Common myeloid progenitor, CD34-positive (primary cell): ENCODE measurements at regions of chr5 and their contacts with region 1.

Region 1: GRCh38 chr5:151051066-151051930 is 29.5 kb downstream of the TNIP1 start:
- DNase-seq: peak; percentile 84 to 91 (median 86)
- H3K4me3 ChIP-seq: no peak overlapping the region
- H3K27ac ChIP-seq: no peak overlapping the region
- H3K4me1 ChIP-seq: peaks cover 1 to 13% (median 9%) of the 10 kb centered on the region in 4 experiments
- H3K27me3 ChIP-seq: no peaks in the 10 kb centered on the region

Region 2: DNA sequence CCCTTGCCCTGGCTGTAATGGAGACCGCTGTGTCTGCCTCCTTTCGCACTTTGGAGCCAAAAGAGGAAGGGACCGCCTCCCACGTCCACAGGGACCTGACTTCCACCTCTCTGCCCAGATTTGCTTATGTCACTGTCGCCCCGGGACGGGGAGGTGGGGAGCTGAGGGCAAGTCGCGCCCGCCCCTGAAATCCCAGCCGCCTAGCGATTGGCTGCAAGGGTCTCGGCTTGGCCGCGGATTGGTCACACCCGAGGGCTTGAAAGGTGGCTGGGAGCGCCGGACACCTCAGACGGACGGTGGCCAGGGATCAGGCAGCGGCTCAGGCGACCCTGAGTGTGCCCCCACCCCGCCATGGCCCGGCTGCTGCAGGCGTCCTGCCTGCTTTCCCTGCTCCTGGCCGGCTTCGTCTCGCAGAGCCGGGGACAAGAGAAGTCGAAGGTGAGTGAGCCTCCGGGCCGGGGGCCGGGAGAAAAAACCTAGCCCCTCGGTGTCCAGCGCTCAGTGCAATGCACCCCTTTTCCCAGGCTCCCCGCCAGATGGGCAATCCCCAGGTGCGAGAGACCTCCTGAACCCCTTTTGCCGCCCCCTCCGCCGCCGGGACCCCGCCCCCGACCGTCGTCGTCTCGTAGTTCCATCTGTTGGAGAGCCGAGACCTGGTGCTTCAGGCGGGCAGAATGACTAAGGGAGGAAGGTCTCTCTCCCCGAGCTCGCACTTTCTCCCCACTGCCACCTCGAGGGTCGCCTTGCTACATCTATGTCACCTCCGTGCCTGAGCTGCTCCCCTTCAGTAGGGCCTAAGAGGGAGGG is 30.8 kb before region 1 on chr5 and contains the start of gene GPX3:
- CTCF ChIA-PET with region 1: interaction called, 10 read pairs
- POLR2A ChIA-PET with region 1: no interaction called
- DNase-seq: peak; percentile 72 to 87 (median 82)
- H3K4me3 ChIP-seq: peak within 1 kb of the TSS; percentile 30 to 78 (median 58)
- H3K27ac ChIP-seq: no peak within 1 kb of the TSS
- H3K4me1 ChIP-seq: peaks cover 0 to 20% (median 12%) of the 10 kb centered on the region in 4 experiments
- H3K27me3 ChIP-seq: peaks cover 0 to 2% (median 0%) of the 10 kb centered on the region in 5 experiments

Region 3: DNA sequence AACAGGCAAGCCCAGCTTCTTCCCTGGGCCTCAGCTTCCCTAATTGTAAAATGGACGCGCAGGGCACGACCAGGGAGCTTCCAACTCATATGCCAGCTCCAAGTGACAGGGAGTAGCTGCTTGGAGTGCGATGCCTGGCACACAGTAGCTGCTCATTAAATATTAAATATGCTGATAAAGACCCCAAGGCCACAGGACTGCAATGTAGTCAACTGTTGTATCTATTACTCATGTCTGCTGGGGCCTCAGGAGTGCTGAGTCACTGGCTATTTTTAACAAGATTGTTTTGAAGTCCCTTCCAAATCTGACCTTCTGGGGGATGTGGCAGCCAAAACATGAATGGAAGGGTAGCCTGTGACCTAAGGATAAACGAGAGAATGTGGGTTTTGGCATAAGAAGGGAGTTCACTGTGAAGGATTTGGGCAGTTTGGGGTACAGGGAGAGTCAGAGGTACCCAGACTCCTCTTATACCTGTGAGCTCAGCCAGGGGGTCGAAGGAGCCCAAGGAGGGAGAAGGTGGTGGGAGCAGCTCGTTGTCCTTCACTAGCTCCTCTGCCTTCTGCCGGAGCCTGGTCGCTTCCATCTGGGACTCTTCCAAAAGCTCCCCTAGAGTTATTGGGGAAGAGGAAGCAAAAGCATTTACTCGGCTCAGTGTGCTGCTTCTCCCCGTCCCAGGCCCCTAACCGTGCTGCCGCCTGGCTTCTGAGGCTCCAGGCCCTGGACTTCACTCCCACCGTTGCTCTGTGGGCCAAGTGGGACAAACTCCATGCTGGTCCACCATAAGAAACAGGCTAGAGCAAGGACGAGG is 12.0 kb after region 1 on chr5:
- CTCF ChIA-PET with region 1: interaction called, 75 read pairs
- POLR2A ChIA-PET with region 1: interaction called, 3 read pairs
- DNase-seq: peak in 2 of 3 donors; percentile 73 to 79
- H3K4me3 ChIP-seq: peak overlapping the region in 1 of 7 experiments; percentile 28
- H3K27ac ChIP-seq: peak overlapping the region in 1 of 2 experiments; percentile 71
- H3K4me1 ChIP-seq: peaks cover 7 to 67% (median 61%) of the 10 kb centered on the region in 4 experiments
- H3K27me3 ChIP-seq: no peaks in the 10 kb centered on the region

Region 4: DNA sequence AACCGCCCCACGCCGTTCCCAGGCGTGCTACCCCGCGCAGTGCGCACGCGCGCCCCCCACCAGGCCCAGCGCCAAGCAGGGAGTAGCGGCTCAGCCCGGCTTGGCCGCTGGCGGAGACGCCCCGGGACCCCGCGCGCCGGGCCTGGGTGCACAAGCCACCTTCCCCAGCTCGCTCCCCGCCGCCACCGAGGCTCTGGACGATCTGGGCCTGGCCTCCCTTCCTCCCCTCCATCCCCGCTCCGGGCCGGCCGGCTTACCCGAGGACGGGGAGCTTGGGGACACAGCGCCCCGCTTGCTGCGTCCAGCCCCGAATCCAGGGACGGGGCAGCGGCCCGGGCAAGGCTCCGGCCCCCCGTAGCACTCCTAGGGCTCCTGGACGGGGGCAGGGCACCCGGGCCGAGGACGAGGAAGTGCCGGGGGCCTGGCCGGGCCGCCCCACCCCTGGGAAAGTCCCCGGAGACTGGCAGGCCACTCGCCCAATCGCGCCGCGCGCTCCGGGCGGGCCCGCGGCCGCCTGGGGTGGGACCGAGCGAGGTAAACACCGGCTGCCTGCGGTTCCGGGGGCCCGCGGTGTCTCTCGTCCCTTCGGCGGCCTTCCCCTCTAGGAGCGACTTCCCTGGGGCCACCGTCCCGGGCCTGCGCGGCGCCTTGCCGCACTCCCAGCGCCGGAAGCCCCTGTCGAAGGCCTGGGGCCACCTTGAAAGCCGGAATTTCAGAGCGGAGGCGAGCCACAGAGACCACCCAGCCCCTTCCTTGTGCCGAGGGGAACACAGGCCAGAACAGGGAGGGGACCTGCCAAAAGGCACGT is 29.5 kb after region 1 on chr5 and contains the start of gene TNIP1:
- CTCF ChIA-PET with region 1: interaction called, 10 read pairs
- POLR2A ChIA-PET with region 1: interaction called, 3 read pairs
- DNase-seq: peak; percentile 89 to 96 (median 95)
- H3K4me3 ChIP-seq: peak within 1 kb of the TSS; percentile 77 to 90 (median 83)
- H3K27ac ChIP-seq: peak within 1 kb of the TSS; percentile 99
- H3K4me1 ChIP-seq: peaks cover 20 to 68% (median 57%) of the 10 kb centered on the region in 4 experiments
- H3K27me3 ChIP-seq: no peaks in the 10 kb centered on the region

Region 5: DNA sequence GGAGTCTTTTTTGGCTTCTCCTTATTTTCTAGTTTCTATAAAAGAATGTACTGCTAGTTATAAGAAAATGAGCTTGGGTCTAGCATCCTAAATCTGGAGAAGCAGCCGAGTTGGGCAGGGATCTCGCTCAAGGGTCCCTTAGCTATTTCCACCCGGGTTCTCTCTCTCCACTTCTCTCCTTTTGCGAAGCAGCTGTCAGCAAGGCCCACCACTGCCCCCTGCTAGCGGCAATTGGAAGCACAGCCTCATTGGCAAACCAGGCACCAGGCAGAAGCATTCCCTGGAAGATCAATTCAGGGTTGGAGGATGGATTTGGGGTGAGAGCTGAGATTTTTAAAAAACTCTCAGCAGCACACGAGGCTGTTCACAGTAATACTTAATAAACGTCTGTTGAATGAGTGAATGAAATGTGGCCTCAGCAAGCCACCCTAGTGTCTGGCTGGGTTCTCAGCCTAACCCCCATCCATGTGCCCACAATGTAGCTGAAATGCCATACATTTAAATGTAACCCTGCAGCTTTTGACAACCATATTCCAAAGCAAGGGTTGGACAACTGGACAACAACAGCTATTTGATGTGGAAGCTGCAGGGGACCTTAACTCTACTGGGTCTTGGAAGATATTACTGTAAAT is 64.1 kb after region 1 on chr5:
- CTCF ChIA-PET with region 1: interaction called, 1,757 read pairs
- POLR2A ChIA-PET with region 1: interaction called, 12 read pairs
- DNase-seq: peak; percentile 51 to 75 (median 70)
- H3K4me3 ChIP-seq: no peak overlapping the region
- H3K27ac ChIP-seq: no peak overlapping the region
- H3K4me1 ChIP-seq: no peaks in the 10 kb centered on the region
- H3K27me3 ChIP-seq: no peaks in the 10 kb centered on the region